ENCODE measurements at regions of chr1 and their contacts with region 1.

Region 1: GRCh38 chr1:175015243-175015642 is 8.0 kb downstream of the MRPS14 start:
- DNase-seq: no peak
- ATAC-seq: no peak
- H3K4me3 Mint-ChIP-seq: no peak overlapping the region
- H3K27ac Mint-ChIP-seq: peak overlapping the region; percentile 51
- H3K4me1 Mint-ChIP-seq: peaks cover 10% of the 10 kb centered on the region
- H3K27me3 Mint-ChIP-seq: no peaks in the 10 kb centered on the region
- CTCF ChIP-seq: no peak

Region 2: GRCh38 chr1:175005085-175005783 is 10.0 kb before region 1 on chr1:
- CTCF ChIA-PET with region 1: interaction called, 3 read pairs
- POLR2A ChIA-PET with region 1: interaction called, 23 read pairs
- intact Hi-C with region 1: no loop called
- DNase-seq: no peak
- ATAC-seq: no peak
- H3K4me3 Mint-ChIP-seq: no peak overlapping the region
- H3K27ac Mint-ChIP-seq: peak overlapping the region; percentile 80
- H3K4me1 Mint-ChIP-seq: peaks cover 53% of the 10 kb centered on the region
- H3K27me3 Mint-ChIP-seq: no peaks in the 10 kb centered on the region
- CTCF ChIP-seq: no peak

Region 3: GRCh38 chr1:175035865-175036264 is 20.6 kb after region 1 on chr1:
- CTCF ChIA-PET with region 1: no interaction called
- POLR2A ChIA-PET with region 1: no interaction called
- intact Hi-C with region 1: no loop called
- DNase-seq: no peak
- ATAC-seq: no peak
- H3K4me3 Mint-ChIP-seq: no peak overlapping the region
- H3K27ac Mint-ChIP-seq: no peak overlapping the region
- H3K4me1 Mint-ChIP-seq: no peaks in the 10 kb centered on the region
- H3K27me3 Mint-ChIP-seq: no peaks in the 10 kb centered on the region
- CTCF ChIP-seq: no peak